CD8-positive, alpha-beta memory T cell (primary cell): ENCODE measurements at regions of chr2 and their contacts with region 1.

Region 1: GRCh38 chr2:96868555-96869280 is 1.2 kb downstream of the SEMA4C start:
- DNase-seq: peak; percentile 45 to 79 (median 61)
- H3K4me3 ChIP-seq: peak overlapping the region; percentile 63
- H3K4me3 Mint-ChIP-seq: peak overlapping the region; percentile 80 to 95 (median 88)
- H3K27ac ChIP-seq: peak overlapping the region; percentile 77
- H3K27ac Mint-ChIP-seq: peak overlapping the region in 7 of 8 donors; percentile 63 to 98 (median 86)
- H3K4me1 ChIP-seq: peaks cover 27% of the 10 kb centered on the region
- H3K4me1 Mint-ChIP-seq: peaks cover 29 to 57% (median 46%) of the 10 kb centered on the region in 3 donors
- H3K27me3 ChIP-seq: no peaks in the 10 kb centered on the region
- H3K27me3 Mint-ChIP-seq: no peaks in the 10 kb centered on the region

Region 2: GRCh38 chr2:96756788-96757479 is 111.8 kb before region 1 on chr2:
- CTCF ChIA-PET with region 1: no interaction called
- POLR2A ChIA-PET with region 1: no interaction called
- DNase-seq: no peak
- H3K4me3 ChIP-seq: no peak overlapping the region
- H3K4me3 Mint-ChIP-seq: no peak overlapping the region
- H3K27ac ChIP-seq: no peak overlapping the region
- H3K27ac Mint-ChIP-seq: peak overlapping the region in 1 of 8 donors; percentile 14
- H3K4me1 ChIP-seq: peaks cover 24% of the 10 kb centered on the region
- H3K4me1 Mint-ChIP-seq: peaks cover 19 to 28% (median 25%) of the 10 kb centered on the region in 3 donors
- H3K27me3 ChIP-seq: no peaks in the 10 kb centered on the region
- H3K27me3 Mint-ChIP-seq: no peaks in the 10 kb centered on the region

Region 3: DNA sequence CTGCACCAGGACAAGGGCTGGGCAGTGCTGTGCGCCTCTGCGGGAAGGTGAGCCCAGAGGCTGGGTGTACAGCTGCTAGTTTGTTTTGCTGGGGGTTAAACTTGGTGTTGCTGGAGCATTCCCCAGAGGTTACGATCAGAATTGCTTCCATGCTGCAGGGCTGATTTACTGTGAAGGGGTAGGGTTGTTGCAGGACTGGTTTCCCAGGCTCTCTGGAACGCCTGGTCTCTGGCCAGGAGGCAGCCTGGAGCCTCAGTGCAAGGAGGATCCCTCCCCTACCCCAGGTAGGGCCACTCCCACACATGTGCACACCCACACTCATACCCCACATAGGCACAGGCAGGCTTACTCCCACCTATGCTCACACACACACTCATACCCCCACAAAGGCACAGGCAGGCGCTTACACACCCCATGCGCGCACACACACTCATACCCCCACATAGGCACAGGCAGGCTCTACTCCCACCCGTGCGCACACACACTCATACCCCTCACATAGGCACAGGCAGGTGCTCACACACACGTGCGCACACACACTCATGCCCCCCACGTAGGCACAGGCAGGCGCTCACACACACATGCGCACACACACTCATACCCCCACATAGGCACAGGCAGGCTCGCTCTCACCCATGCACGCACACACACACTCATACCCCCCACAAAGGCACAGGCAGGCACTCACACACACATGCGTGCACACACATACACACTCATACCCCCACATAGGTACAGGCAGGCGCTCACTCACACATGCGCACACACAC is 96.7 kb before region 1 on chr2:
- CTCF ChIA-PET with region 1: no interaction called
- POLR2A ChIA-PET with region 1: no interaction called
- DNase-seq: no peak
- H3K4me3 ChIP-seq: no peak overlapping the region
- H3K4me3 Mint-ChIP-seq: peak overlapping the region in 6 of 7 donors; percentile 6 to 78 (median 50)
- H3K27ac ChIP-seq: no peak overlapping the region
- H3K27ac Mint-ChIP-seq: peak overlapping the region in 6 of 8 donors; percentile 2 to 84 (median 68)
- H3K4me1 ChIP-seq: peaks cover 10% of the 10 kb centered on the region
- H3K4me1 Mint-ChIP-seq: peaks cover 33 to 51% (median 46%) of the 10 kb centered on the region in 3 donors
- H3K27me3 ChIP-seq: no peaks in the 10 kb centered on the region
- H3K27me3 Mint-ChIP-seq: peaks cover 0 to 5% of the 10 kb centered on the region in 2 donors

Region 4: GRCh38 chr2:96816128-96816835 is 52.4 kb before region 1 on chr2 and contains the start of gene CNNM3:
- CTCF ChIA-PET with region 1: no interaction called
- POLR2A ChIA-PET with region 1: interaction called, 12 read pairs
- DNase-seq: peak; percentile 91 to 96 (median 94)
- H3K4me3 ChIP-seq: peak within 1 kb of the TSS; percentile 84
- H3K4me3 Mint-ChIP-seq: peak within 1 kb of the TSS; percentile 92 to 97 (median 96)
- H3K27ac ChIP-seq: peak within 1 kb of the TSS; percentile 69
- H3K27ac Mint-ChIP-seq: peak within 1 kb of the TSS; percentile 56 to 96 (median 94)
- H3K4me1 ChIP-seq: peaks cover 48% of the 10 kb centered on the region
- H3K4me1 Mint-ChIP-seq: peaks cover 60 to 76% (median 68%) of the 10 kb centered on the region in 3 donors
- H3K27me3 ChIP-seq: no peaks in the 10 kb centered on the region
- H3K27me3 Mint-ChIP-seq: peaks cover 0 to 1% of the 10 kb centered on the region in 2 donors
- total RNA-seq, gene CNNM3: 32.6 to 36.6 TPM

Region 5: GRCh38 chr2:96960153-96960961 is 91.6 kb after region 1 on chr2:
- CTCF ChIA-PET with region 1: interaction called, 358 read pairs
- POLR2A ChIA-PET with region 1: interaction called, 5 read pairs
- DNase-seq: peak; percentile 70 to 88 (median 75)
- H3K4me3 ChIP-seq: no peak overlapping the region
- H3K4me3 Mint-ChIP-seq: peak overlapping the region; percentile 33 to 90 (median 43)
- H3K27ac ChIP-seq: no peak overlapping the region
- H3K27ac Mint-ChIP-seq: peak overlapping the region; percentile 64 to 95 (median 87)
- H3K4me1 ChIP-seq: peaks cover 52% of the 10 kb centered on the region
- H3K4me1 Mint-ChIP-seq: peaks cover 47 to 52% (median 50%) of the 10 kb centered on the region in 3 donors
- H3K27me3 ChIP-seq: no peaks in the 10 kb centered on the region
- H3K27me3 Mint-ChIP-seq: no peaks in the 10 kb centered on the region

Region 6: GRCh38 chr2:96970248-96970875 is 101.6 kb after region 1 on chr2:
- CTCF ChIA-PET with region 1: no interaction called
- POLR2A ChIA-PET with region 1: no interaction called
- DNase-seq: no peak
- H3K4me3 ChIP-seq: no peak overlapping the region
- H3K4me3 Mint-ChIP-seq: no peak overlapping the region
- H3K27ac ChIP-seq: no peak overlapping the region
- H3K27ac Mint-ChIP-seq: peak overlapping the region in 1 of 8 donors; percentile 63
- H3K4me1 ChIP-seq: peaks cover 32% of the 10 kb centered on the region
- H3K4me1 Mint-ChIP-seq: peaks cover 6 to 31% (median 26%) of the 10 kb centered on the region in 3 donors
- H3K27me3 ChIP-seq: no peaks in the 10 kb centered on the region
- H3K27me3 Mint-ChIP-seq: peaks cover 0 to 12% of the 10 kb centered on the region in 2 donors